ENCODE measurements at regions of chr12 and their contacts with region 1.

Region 1: GRCh38 chr12:121184425-121184824 is 25.5 kb upstream of the P2RX4 start:
- DNase-seq: no peak
- ATAC-seq: no peak
- H3K4me3 ChIP-seq: no peak overlapping the region
- H3K27ac ChIP-seq: no peak overlapping the region
- H3K4me1 ChIP-seq: no peaks in the 10 kb centered on the region
- H3K27me3 ChIP-seq: no peaks in the 10 kb centered on the region
- CTCF ChIP-seq: no peak

Region 2: DNA sequence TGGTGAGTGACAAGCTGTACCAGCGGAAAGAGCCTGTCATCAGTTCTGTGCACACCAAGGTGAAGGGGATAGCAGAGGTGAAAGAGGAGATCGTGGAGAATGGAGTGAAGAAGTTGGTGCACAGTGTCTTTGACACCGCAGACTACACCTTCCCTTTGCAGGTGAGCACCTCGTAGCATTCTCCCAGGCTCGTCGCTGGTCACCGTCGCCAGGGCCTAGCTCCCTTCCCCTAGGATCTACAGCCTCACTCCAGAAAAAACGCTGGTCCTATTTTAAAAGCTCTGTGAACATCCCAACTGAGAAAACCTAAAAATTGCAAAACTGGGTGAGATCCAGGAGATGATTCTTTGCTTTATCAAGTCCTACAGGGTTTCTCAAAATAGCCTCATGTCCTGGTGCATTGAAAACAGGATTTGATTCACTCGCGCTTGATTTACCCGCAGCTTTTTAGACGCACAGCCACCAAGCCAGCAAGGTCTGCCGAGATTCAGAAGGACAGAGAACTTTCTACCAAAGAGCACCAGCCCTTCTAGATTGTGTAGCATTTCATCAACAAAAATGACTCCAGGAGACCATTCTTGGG is 29.5 kb before region 1 on chr12:
- CTCF ChIA-PET with region 1: no interaction called
- POLR2A ChIA-PET with region 1: interaction called, 11 read pairs
- intact Hi-C with region 1: no loop called
- DNase-seq: no peak
- ATAC-seq: no peak
- H3K4me3 ChIP-seq: no peak overlapping the region
- H3K27ac ChIP-seq: no peak overlapping the region
- H3K4me1 ChIP-seq: no peaks in the 10 kb centered on the region
- H3K27me3 ChIP-seq: no peaks in the 10 kb centered on the region
- CTCF ChIP-seq: no peak